ENCODE measurements at regions of chr16 and their contacts with region 1.

Region 1: DNA sequence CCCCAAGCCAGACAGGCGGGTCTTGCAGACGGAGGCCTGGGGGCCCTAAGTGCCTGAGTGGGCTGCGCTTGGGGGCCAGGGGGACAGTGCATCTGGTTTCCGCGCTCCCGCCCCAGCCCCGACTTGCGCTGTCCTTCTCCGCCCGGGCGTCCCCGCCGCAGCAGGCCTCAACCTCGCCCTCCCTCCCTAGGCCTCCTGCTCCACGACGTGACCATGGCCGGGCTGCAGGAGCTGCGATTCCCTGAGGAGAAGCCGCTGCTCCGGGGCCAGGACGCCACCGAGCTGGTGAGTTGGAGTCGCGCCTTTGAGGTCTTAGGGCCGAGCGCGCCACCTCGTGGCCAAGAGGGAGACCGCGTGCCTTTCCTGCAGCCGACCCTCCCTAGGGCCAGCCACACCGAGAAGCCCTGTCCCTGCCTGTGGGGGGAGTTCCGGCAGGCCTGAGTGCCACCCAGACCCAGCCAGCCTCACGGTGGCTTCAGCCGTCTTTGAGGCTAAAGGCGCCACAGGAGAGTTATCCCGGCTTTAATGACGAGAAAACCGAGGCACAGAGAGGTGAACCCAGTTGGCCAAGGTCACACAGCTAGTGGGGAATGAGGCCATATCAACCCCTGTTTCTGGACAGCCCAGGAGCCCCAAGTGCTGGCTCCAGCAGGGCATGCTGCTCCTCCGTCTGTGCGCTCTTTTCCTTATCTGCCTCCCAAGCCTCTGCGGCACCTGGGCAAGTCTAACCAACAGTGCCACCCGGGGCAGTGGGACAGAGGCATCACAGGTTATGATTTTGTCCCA is 12.2 kb upstream of the NDRG4 start:
- DNase-seq: peak; percentile 38
- H3K4me3 ChIP-seq: 0 out of 2 replicates have a peak overlapping the region, but pooled peaks have one; percentile 4
- H3K27ac ChIP-seq: no peak overlapping the region
- H3K27me3 ChIP-seq: peaks cover 11% of the 10 kb centered on the region
- CTCF ChIP-seq: peak; percentile 84

Region 2: DNA sequence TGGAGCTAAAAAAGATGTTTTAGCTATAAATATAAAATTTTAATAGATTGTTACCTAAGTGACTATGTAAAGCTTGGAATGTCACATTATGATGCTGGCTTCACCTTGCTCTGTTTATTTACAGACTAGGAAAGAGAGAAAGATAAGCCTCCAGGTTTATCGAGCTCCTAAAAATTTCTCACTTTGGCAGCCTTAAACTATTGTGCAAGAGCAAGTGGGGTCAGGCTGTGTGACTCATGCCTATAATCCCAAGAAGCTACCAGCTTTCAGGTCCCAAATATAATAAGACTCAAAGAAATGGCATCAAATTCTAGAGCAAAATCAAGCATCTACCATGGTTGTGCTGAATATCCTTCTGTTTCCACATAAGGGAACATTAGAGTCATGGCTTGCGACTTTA is 158.6 kb before region 1 on chr16:
- CTCF ChIA-PET with region 1: interaction called, 10 read pairs
- POLR2A ChIA-PET with region 1: interaction called, 3 read pairs
- DNase-seq: no peak
- H3K4me3 ChIP-seq: no peak overlapping the region
- H3K27ac ChIP-seq: no peak overlapping the region
- H3K27me3 ChIP-seq: peaks cover 2% of the 10 kb centered on the region
- CTCF ChIP-seq: no peak

Region 3: DNA sequence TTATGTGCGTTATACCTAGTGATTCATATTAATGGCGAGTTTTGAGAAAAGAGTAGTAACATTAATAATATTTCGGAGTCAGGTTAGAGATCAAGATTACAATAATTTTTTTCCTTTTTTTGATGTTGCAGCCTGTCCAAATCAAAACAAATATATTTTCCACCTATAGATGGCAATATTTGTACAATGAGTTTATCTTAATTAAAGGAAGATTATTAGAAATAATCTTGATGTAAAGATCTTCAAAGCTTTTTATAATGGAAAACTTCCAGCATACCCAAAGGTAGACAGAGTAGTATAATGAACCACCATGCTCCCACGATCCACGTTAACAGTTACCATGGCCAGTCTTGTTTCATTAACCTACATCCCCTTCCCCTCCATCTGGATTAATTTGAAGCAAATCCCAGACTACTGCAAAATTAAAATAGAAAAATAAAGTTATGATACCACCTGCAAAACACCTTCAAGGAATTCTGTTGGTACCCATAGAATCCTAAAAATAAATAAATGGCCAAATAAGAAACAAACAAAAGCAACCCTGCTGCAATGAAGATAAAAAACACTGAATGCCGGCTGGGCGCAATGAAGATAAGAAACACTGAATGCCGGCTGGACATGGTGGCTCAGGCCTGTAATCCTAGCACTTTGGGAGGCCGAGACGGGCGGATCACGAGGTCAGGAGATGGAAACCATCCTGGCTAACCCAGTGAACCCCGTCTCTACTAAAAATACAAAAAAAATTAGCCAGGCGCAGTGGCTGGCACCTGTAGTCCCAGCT is 142.0 kb before region 1 on chr16:
- CTCF ChIA-PET with region 1: interaction called, 21 read pairs
- POLR2A ChIA-PET with region 1: no interaction called
- DNase-seq: no peak
- H3K4me3 ChIP-seq: no peak overlapping the region
- H3K27ac ChIP-seq: no peak overlapping the region
- H3K27me3 ChIP-seq: peaks cover 7% of the 10 kb centered on the region
- CTCF ChIP-seq: peak; percentile 19; the same call in 1 of the 2 replicates

Measured in AG04450 (cell line).